Left lung (tissue), 14 donors: ENCODE measurements at regions of chr4 and their contacts with region 1.

Region 1: GRCh38 chr4:108155373-108155772 is 13.4 kb downstream of the LEF1 start:
- DNase-seq: no peak
- ATAC-seq: no peak
- H3K4me3 ChIP-seq: no peak overlapping the region
- H3K27ac ChIP-seq: no peak overlapping the region
- H3K4me1 ChIP-seq: no peaks in the 10 kb centered on the region
- H3K27me3 ChIP-seq: peaks cover 4 to 16% of the 10 kb centered on the region in 2 donors
- CTCF ChIP-seq: no peak

Region 2: GRCh38 chr4:108360754-108361445 is 205.5 kb after region 1 on chr4:
- intact Hi-C with region 1: no loop called
- DNase-seq: peak in 2 of 4 donors; percentile 24 to 39
- ATAC-seq: peak; percentile 41
- H3K4me3 ChIP-seq: no peak overlapping the region
- H3K27ac ChIP-seq: peak overlapping the region in 1 of 2 donors; percentile 19
- H3K4me1 ChIP-seq: peaks cover 0 to 4% of the 10 kb centered on the region in 2 donors
- H3K27me3 ChIP-seq: no peaks in the 10 kb centered on the region
- CTCF ChIP-seq: no peak

Region 3: GRCh38 chr4:109171084-109171483 is 1015.7 kb after region 1 on chr4:
- intact Hi-C with region 1: loop called in 1 of 2 experiments (anchors 10 kb)
- DNase-seq: no peak
- ATAC-seq: no peak
- H3K4me3 ChIP-seq: no peak overlapping the region
- H3K27ac ChIP-seq: no peak overlapping the region
- H3K4me1 ChIP-seq: no peaks in the 10 kb centered on the region
- H3K27me3 ChIP-seq: no peaks in the 10 kb centered on the region
- CTCF ChIP-seq: no peak